ENCODE measurements at regions of chr6 and their contacts with region 1.

Region 1: DNA sequence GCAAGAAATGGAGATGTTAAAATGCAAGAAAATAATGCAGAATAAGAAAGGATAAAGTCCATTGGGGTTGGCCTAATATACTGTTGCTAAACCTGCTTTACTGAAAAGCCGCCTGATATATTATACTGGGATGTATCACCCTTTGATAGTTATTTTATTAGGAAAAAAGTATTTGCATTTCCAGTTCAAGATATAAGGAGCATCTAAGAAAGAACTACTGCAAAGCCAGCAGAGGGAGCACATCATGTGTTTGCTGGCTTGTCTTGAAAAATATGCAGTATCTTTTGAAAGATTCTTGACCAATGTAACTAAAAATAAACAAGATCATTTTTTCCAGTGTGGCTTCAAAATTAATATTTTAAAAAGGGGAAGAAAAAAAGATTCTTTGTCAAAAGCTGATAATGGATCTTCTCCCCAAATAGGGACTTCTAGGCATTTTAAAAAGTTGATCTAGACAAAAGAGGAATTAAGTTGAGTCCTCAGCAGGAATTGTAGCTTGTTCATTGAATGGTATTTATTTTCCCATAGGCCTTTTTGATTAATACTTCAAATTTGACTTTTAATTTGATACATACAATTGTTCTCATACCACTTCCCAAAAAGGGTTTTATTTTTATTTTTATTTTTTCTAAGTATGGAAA is 214.9 kb downstream of the ZFAND3 start:
- DNase-seq: peak; percentile 42 to 66 (median 65)
- H3K4me3 ChIP-seq: no peak overlapping the region
- H3K27ac ChIP-seq: no peak overlapping the region
- H3K4me1 ChIP-seq: peaks cover 0 to 5% (median 0%) of the 10 kb centered on the region in 4 experiments
- H3K27me3 ChIP-seq: no peaks in the 10 kb centered on the region

Region 2: GRCh38 chr6:38020593-38020992 is 13.8 kb before region 1 on chr6:
- CTCF ChIA-PET with region 1: interaction called, 45 read pairs
- POLR2A ChIA-PET with region 1: no interaction called
- DNase-seq: no peak
- H3K4me3 ChIP-seq: no peak overlapping the region
- H3K27ac ChIP-seq: no peak overlapping the region
- H3K4me1 ChIP-seq: peaks cover 0 to 10% (median 7%) of the 10 kb centered on the region in 4 experiments
- H3K27me3 ChIP-seq: no peaks in the 10 kb centered on the region

Region 3: GRCh38 chr6:38045701-38046305 is 11.4 kb after region 1 on chr6:
- CTCF ChIA-PET with region 1: interaction called, 20 read pairs
- POLR2A ChIA-PET with region 1: no interaction called
- DNase-seq: no peak
- H3K4me3 ChIP-seq: no peak overlapping the region
- H3K27ac ChIP-seq: no peak overlapping the region
- H3K4me1 ChIP-seq: no peaks in the 10 kb centered on the region
- H3K27me3 ChIP-seq: no peaks in the 10 kb centered on the region

Region 4: DNA sequence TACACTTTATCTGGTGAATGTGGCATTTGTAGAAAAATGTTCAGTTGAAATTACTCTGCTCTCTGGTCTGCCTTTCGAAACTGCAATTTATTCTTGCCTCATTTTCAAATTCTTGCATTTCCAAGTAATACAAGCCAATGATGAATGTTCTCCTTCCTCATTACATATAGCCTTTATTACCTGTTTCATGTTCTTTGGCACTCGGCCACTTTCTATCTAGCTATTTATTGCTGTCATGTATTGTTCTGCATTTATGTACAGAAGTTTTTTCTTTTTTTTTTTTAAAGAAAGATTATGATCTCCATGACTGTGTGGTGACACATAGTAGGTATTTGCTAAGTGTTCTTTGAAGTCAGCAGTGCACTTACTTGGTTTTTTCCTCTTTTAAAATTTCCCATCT is 46.5 kb after region 1 on chr6:
- CTCF ChIA-PET with region 1: no interaction called
- POLR2A ChIA-PET with region 1: no interaction called
- DNase-seq: peak; percentile 2 to 63 (median 59)
- H3K4me3 ChIP-seq: no peak overlapping the region
- H3K27ac ChIP-seq: no peak overlapping the region
- H3K4me1 ChIP-seq: no peaks in the 10 kb centered on the region
- H3K27me3 ChIP-seq: no peaks in the 10 kb centered on the region

Region 5: DNA sequence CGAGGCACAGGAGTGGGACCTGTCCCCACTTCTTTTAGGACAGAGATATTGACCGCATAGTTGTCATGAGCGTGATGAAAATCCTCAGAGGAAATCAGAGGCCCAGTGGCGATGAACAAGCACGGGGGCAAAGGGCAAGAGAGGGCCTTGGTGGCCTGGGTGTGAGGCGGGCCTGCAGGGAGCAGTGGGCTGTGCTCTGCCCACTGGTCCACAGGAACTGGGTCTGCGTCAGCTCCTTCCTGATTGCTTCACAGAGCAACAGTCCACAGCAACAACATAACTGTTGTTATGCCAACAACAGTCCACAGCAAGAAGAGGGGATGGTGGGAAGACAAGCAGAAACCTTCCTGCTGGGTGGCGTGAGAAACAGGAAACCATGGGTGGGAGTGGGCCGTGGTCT is 120.8 kb after region 1 on chr6:
- CTCF ChIA-PET with region 1: no interaction called
- POLR2A ChIA-PET with region 1: no interaction called
- DNase-seq: peak; percentile 49 to 76 (median 71)
- H3K4me3 ChIP-seq: no peak overlapping the region
- H3K27ac ChIP-seq: peak overlapping the region; percentile 55 to 81
- H3K4me1 ChIP-seq: peaks cover 0 to 16% (median 12%) of the 10 kb centered on the region in 4 experiments
- H3K27me3 ChIP-seq: no peaks in the 10 kb centered on the region

Region 6: GRCh38 chr6:38493931-38494547 is 459.6 kb after region 1 on chr6:
- CTCF ChIA-PET with region 1: interaction called, 27 read pairs
- POLR2A ChIA-PET with region 1: no interaction called
- DNase-seq: peak; percentile 69 to 87 (median 80)
- H3K4me3 ChIP-seq: no peak overlapping the region
- H3K27ac ChIP-seq: no peak overlapping the region
- H3K4me1 ChIP-seq: no peaks in the 10 kb centered on the region
- H3K27me3 ChIP-seq: no peaks in the 10 kb centered on the region

Measured in common myeloid progenitor, CD34-positive (primary cell).